Activated CD4-positive, alpha-beta T cell treated with anti-CD3 and anti-CD28 coated beads for 36 hours (primary cell): ENCODE measurements at regions of chr11 and their contacts with region 1.

Region 1: GRCh38 chr11:10307442-10308207 is 2.8 kb downstream of the ADM start:
- DNase-seq: peak; percentile 95
- ATAC-seq: peak; percentile 75
- H3K4me3 Mint-ChIP-seq: peak overlapping the region; percentile 77
- H3K27ac Mint-ChIP-seq: peak overlapping the region; percentile 96
- H3K4me1 Mint-ChIP-seq: peaks cover 50% of the 10 kb centered on the region
- H3K27me3 Mint-ChIP-seq: peaks cover 49% of the 10 kb centered on the region

Region 2: DNA sequence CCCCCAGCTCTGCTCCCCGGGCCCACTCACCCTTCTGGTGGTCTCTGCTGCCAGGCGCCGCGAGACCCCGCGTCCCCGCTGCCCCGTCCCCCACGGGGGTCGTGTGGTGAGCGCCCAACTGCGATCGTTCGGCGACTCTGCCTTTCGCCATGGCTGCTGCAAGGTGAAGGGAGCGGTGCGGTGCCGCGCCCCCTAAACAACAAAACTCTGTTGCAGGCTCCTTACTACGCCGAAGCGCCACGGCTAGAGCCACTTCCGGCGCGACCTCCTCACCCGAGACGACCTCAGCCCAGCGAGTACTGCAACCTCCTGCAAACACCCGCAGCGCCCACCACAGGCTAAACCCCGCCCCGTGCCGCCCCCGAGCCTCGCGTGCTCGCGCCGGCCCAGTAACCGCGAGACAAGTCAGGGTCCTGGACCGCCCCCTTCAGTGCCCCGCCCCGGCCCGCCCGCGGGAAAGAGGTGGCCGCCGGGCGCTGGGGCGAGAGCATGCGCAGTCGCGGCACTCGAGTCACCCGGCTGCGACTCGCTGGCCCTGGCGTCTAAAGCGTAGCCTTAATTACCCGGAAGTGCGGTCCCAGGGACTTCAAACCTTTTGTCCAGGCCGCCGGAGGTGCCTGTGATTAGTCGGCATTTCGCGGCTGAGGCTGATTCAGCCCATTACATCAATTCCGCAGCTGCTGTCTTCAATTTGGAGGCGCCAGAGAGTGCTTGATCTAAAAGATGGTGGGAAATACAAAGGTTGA is 993.2 kb before region 1 on chr11 and contains the start of gene TMEM41B:
- CTCF ChIA-PET with region 1: no interaction called
- POLR2A ChIA-PET with region 1: no interaction called
- intact Hi-C with region 1: loop called in 1 of 2 experiments (anchors 5 kb)
- DNase-seq: peak; percentile 100
- ATAC-seq: peak; percentile 95
- H3K4me3 Mint-ChIP-seq: peak within 1 kb of the TSS; percentile 99
- H3K27ac Mint-ChIP-seq: peak within 1 kb of the TSS; percentile 99
- H3K4me1 Mint-ChIP-seq: peaks cover 36% of the 10 kb centered on the region
- H3K27me3 Mint-ChIP-seq: peaks cover 11% of the 10 kb centered on the region
- total RNA-seq, gene TMEM41B: 20.2 to 29.3 TPM

Region 3: GRCh38 chr11:9534791-9535781 is 772.5 kb before region 1 on chr11:
- CTCF ChIA-PET with region 1: interaction called, 6 read pairs
- POLR2A ChIA-PET with region 1: no interaction called
- intact Hi-C with region 1: loop called in 1 of 2 experiments (anchors 1 kb)
- DNase-seq: peak; percentile 91
- ATAC-seq: peak; percentile 71
- H3K4me3 Mint-ChIP-seq: no peak overlapping the region
- H3K27ac Mint-ChIP-seq: no peak overlapping the region
- H3K4me1 Mint-ChIP-seq: no peaks in the 10 kb centered on the region
- H3K27me3 Mint-ChIP-seq: no peaks in the 10 kb centered on the region

Region 4: DNA sequence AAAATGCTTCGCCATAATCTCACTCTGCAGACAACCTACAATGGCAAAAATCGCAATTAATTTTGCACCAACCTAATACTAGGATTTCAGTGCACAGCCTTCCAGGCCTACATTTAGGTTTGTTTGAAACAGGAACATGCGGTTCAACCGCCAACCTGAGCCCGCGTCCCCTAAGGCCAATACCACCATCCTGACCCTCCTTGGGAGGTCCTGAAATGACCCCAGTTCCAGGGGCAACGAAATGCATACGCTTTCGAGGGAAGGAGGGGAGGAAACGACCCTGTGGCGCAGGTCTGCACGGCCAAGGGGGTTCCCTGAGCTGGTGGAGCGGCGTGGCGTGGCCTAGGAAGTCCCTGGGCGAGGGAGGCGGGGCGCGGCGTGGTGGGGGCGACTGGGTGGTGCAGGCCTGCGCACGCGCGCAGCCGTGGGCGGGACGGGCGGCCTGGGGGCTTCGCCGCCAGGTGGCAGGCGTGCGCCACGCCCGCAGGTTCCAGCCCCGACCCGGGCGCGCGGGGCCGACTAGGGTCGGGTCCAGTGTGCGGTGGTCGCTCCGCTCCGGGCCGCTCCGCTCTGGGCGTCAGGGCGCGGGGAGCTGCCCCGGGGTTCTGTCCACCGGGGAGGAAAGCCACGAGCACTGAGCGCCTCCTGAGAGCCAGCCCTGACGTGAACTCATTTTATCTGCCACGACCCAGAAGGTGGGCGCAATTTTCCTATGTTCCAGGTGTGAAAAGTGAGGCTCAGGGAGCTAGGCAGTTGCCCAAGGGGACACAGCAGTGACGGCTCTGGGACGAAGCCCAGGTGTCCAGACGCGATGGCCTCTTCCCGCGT is 549.6 kb before region 1 on chr11:
- CTCF ChIA-PET with region 1: interaction called, 10 read pairs
- POLR2A ChIA-PET with region 1: interaction called, 3 read pairs
- intact Hi-C with region 1: loop called (anchors 1 kb)
- DNase-seq: peak; percentile 97
- ATAC-seq: peak; percentile 47
- H3K4me3 Mint-ChIP-seq: peak overlapping the region; percentile 86
- H3K27ac Mint-ChIP-seq: peak overlapping the region; percentile 89
- H3K4me1 Mint-ChIP-seq: peaks cover 51% of the 10 kb centered on the region
- H3K27me3 Mint-ChIP-seq: no peaks in the 10 kb centered on the region

Region 5: GRCh38 chr11:10255388-10256125 is 52.1 kb before region 1 on chr11:
- CTCF ChIA-PET with region 1: no interaction called
- POLR2A ChIA-PET with region 1: no interaction called
- intact Hi-C with region 1: no loop called
- DNase-seq: no peak
- ATAC-seq: no peak
- H3K4me3 Mint-ChIP-seq: no peak overlapping the region
- H3K27ac Mint-ChIP-seq: no peak overlapping the region
- H3K4me1 Mint-ChIP-seq: no peaks in the 10 kb centered on the region
- H3K27me3 Mint-ChIP-seq: no peaks in the 10 kb centered on the region

Region 6: DNA sequence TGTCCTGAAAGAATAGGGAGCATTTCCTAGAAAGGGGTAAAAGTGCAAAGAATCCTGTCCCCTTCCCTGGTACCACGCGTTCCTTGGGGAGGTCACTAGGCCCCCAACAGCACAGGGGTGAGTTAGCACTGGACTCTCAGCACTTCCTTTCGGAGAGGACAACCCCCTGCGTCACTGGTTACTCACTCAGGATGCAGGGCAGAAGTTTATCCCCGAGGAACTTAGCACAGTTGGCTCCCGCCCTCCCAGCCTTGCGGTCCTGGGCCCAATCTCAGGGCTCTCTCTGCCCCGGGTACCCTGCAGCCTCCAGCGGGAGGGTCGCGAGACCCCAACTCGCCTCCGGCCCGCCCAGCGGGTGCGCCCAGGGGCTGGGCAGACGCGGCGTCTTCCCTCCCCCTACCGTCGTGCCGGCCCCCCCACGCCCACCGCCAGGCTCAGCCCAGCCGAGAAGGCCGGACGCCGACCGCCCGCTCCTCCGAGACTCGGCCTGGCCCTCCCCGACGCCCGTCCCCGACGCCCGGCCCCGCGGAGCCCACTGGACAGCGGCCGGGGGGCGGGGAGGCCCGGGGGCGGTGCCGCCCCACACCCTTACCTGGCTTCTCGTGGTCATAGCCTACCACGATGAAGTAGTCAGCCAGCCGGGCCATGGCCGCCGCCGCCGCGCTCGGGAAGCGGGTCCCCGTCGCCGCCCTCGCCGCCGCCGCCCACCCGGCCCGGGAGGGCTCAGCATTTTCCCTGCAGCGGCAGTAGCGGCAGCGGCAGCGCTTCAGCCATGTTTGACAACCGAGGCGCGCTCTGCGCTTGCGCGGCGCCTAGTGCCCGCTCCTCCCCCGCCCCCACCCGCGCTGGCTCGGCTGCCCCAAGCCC is 14.0 kb before region 1 on chr11 and contains the start of gene SBF2:
- CTCF ChIA-PET with region 1: interaction called, 6 read pairs
- POLR2A ChIA-PET with region 1: interaction called, 6 read pairs
- intact Hi-C with region 1: loop called (anchors 1 kb)
- DNase-seq: peak; percentile 89
- ATAC-seq: peak; percentile 69
- H3K4me3 Mint-ChIP-seq: peak within 1 kb of the TSS; percentile 69
- H3K27ac Mint-ChIP-seq: no peak within 1 kb of the TSS
- H3K4me1 Mint-ChIP-seq: peaks cover 37% of the 10 kb centered on the region
- H3K27me3 Mint-ChIP-seq: peaks cover 31% of the 10 kb centered on the region
- total RNA-seq, gene SBF2: 7.1 to 8.1 TPM

Region 7: DNA sequence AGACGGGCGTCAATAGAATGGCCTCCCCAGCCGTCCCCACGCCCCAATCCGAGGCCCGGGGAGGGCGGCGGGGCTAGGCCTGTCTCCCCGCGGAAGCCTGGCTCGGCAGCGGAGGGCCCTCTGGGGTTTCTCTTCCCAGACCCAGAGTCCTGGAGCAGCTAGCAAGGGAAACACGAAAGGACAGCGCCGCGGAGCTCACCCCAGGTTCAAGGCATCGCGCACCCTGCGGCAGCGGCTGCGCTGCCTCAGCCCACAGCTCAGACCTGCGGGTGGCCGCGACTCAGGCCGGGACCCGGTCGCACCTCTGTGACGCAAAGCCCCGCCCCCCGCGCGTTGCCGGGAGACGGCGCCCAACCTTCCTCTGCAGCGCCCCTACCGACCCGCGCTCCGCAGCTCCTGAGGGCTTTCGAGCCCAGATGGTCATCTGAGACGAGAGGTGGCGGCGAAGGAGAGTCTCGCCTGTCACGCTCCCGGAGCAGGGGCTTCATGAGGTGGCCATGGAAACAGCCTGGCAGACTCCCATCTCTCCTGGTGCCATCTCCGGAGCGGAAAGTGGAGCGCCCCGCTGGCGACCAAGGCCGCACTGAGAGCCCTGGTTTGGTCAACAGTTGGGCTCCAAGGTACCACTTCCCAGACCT is 233.4 kb after region 1 on chr11 and contains the start of gene RNF141:
- CTCF ChIA-PET with region 1: no interaction called
- POLR2A ChIA-PET with region 1: no interaction called
- intact Hi-C with region 1: loop called in 1 of 2 experiments (anchors 5 kb)
- DNase-seq: peak; percentile 98
- ATAC-seq: peak; percentile 98
- H3K4me3 Mint-ChIP-seq: peak within 1 kb of the TSS; percentile 88
- H3K27ac Mint-ChIP-seq: peak within 1 kb of the TSS; percentile 58
- H3K4me1 Mint-ChIP-seq: peaks cover 17% of the 10 kb centered on the region
- H3K27me3 Mint-ChIP-seq: no peaks in the 10 kb centered on the region
- total RNA-seq, gene RNF141: 12.5 to 17.8 TPM